Right lobe of liver (tissue), 6 donors: ENCODE measurements at regions of chr6 and their contacts with region 1.

Region 1: GRCh38 chr6:13336553-13336952 is 8.2 kb upstream of the TBC1D7 start:
- DNase-seq: peak in 2 of 3 donors; percentile 76 to 80
- ATAC-seq: peak; percentile 94 to 96 (median 96)
- H3K4me3 ChIP-seq: no peak overlapping the region
- H3K27ac ChIP-seq: no peak overlapping the region
- H3K4me1 ChIP-seq: no peaks in the 10 kb centered on the region
- H3K27me3 ChIP-seq: no peaks in the 10 kb centered on the region
- CTCF ChIP-seq: peak; percentile 73 to 90 (median 84)
- POLR2A ChIP-seq: no peak

Region 2: GRCh38 chr6:12911387-12911960 is 425.1 kb before region 1 on chr6:
- intact Hi-C with region 1: loop called in 1 of 2 experiments (anchors 10 kb)
- DNase-seq: no peak
- ATAC-seq: peak; percentile 58 to 81 (median 73)
- H3K4me3 ChIP-seq: no peak overlapping the region
- H3K27ac ChIP-seq: no peak overlapping the region
- H3K4me1 ChIP-seq: no peaks in the 10 kb centered on the region
- H3K27me3 ChIP-seq: no peaks in the 10 kb centered on the region
- CTCF ChIP-seq: peak; percentile 47 to 58 (median 52)
- POLR2A ChIP-seq: no peak

Region 3: DNA sequence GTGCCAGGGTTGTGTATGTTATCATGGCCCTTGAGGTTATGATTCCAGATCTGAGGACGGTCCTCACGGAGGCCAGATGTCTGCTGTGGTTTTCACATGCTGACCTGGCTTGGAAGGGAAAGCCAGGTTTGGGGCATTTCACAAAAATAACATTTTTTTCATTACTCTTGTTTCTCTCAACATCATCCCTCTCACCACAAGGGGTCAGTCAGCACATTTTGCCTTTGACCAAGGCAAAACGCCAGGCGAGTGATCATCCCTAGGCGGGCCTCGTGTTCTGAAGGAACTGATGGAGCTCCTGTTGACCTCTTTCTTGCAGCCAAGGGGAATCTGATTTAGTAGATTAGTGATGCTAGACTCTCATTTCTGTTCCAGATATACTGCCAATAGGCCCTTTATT is 141.7 kb before region 1 on chr6:
- intact Hi-C with region 1: loop called in 1 of 2 experiments (anchors 10 kb)
- DNase-seq: peak; percentile 62 to 69 (median 66)
- ATAC-seq: peak; percentile 74 to 87 (median 81)
- H3K4me3 ChIP-seq: no peak overlapping the region
- H3K27ac ChIP-seq: no peak overlapping the region
- H3K4me1 ChIP-seq: no peaks in the 10 kb centered on the region
- H3K27me3 ChIP-seq: no peaks in the 10 kb centered on the region
- CTCF ChIP-seq: peak; percentile 48 to 66 (median 58)
- POLR2A ChIP-seq: no peak

Region 4: DNA sequence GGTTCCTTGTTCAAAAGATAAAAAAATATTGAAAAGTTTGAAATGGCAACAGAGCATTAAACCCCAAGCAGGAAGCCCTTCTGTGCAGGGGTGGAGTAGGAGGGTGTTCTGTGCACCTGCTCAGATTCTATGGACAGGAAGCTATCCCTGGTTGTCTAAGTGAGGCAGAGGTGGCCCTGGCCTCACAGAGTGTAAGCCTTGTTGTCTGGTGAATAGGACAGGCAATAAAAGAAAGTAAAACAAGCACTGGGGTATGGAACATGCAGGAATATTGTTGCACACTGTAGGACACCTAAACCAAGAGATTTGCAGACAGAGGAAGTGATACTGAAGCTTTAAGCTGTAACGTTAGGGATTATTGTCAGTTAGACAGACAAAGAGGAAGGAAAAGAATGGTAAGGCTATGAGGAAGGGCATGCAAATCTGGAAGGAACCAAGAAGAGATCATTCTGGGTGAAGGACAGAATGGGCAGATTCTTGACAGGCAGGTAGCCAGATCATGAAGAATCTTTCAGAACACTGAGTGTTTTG is 75.0 kb before region 1 on chr6:
- intact Hi-C with region 1: no loop called
- DNase-seq: no peak
- ATAC-seq: peak; percentile 37 to 68 (median 58)
- H3K4me3 ChIP-seq: no peak overlapping the region
- H3K27ac ChIP-seq: no peak overlapping the region
- H3K4me1 ChIP-seq: no peaks in the 10 kb centered on the region
- H3K27me3 ChIP-seq: no peaks in the 10 kb centered on the region
- CTCF ChIP-seq: no peak
- POLR2A ChIP-seq: no peak

Region 5: DNA sequence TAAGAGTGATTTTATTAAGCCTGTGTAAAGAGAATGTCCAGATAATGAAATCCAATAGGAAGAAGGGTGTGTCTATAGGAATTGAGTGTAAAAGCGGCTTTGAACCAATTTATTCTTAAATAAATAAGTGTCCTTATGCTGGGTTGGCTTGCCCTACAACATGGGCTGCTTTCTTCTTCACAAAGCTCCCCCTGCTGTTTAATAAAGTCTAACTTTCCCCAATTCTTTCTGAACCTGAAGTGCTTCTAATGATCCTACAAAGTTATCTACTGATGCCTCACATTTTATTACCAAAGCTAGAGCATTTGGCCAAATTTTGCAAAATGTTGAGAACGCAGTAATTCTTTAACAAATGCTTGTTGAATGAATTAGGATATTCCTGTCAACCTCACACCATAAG is 201.5 kb after region 1 on chr6:
- intact Hi-C with region 1: loop called in 1 of 2 experiments (anchors 10 kb)
- DNase-seq: no peak
- ATAC-seq: peak; percentile 66 to 81 (median 75)
- H3K4me3 ChIP-seq: no peak overlapping the region
- H3K27ac ChIP-seq: no peak overlapping the region
- H3K4me1 ChIP-seq: peaks cover 0 to 14% (median 0%) of the 10 kb centered on the region in 4 donors
- H3K27me3 ChIP-seq: no peaks in the 10 kb centered on the region
- CTCF ChIP-seq: peak; percentile 37 to 48 (median 42)
- POLR2A ChIP-seq: no peak

Region 6: DNA sequence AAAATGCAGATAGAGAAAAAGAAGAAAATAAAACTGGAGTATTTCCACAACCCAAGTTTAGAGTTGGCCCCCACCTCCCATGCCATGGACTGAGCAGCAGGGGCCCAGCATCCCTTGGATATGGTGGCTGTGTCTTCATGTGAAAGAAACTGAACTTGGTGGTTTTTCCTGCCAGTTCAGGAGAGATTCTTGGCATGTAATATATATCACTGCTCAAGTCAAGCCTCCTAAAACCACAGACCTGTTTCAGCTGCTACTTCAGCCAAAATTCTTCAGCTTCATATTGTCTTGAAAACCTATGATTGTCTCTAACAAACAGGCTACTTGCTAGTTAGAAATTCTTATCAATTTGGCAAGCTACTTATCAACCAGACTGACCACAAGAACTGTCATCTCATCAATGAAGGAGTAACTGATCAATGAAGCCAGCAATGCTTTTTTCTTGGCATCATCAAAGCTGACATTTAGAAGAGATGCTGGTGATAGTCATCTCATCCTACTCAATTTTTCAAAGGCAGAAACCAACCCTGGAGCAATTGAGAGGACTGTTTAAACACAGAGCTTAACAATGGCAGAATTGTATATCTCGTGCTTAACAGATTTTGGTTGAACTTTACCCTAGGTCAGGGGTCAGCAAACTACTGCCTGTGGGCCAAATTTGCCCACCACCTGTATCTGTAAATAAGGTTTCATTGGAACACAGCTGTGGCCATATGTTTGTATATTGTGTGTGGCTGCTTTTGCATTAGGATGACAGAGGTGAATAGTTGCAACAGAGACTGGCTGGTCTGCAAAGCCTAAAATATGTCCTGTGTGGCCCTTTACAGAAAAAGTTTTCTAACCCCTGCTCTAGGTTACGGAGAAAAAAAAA is 268.2 kb after region 1 on chr6:
- intact Hi-C with region 1: loop called in 1 of 2 experiments (anchors 10 kb)
- DNase-seq: no peak
- ATAC-seq: no peak
- H3K4me3 ChIP-seq: no peak overlapping the region
- H3K27ac ChIP-seq: no peak overlapping the region
- H3K4me1 ChIP-seq: no peaks in the 10 kb centered on the region
- H3K27me3 ChIP-seq: no peaks in the 10 kb centered on the region
- CTCF ChIP-seq: no peak
- POLR2A ChIP-seq: no peak